ENCODE measurements at regions of chr3 and their contacts with region 1.

Region 1: DNA sequence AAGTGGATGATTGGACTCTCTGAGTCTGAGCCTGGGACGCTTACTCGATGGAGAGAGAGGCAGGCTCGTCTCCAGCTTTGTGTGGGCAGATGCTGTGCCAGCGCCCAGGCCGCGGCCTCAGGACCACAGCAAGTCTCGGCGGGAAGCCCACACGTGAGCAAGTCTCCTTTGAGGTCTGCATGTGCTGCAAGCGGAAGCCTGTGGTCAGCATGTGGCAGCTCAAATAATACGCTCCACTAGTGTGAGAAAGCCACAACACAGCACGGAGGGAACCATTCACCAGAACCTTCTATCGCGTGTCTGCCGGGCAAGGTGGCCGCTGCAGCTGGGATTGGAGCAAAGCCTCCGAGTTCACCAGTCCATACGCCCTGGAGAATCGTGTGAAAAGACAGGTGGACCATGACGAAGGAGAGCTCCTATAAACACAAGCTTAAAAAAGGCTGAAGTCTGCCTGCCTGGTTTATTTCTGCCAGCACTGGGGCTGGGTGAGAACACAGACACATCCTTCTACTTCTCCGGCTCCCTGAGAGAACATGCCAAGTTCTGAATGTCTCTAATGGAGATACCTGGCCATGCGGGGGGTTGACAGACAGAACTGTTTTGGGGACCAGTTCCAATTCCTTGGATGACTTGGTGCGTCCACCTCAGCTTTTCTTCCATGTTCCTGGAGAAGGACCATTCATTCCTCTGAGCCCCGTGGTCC is 82.0 kb upstream of the LRIG1 start:
- DNase-seq: no peak
- H3K4me3 ChIP-seq: no peak overlapping the region
- H3K27ac ChIP-seq: no peak overlapping the region
- H3K4me1 ChIP-seq: no peaks in the 10 kb centered on the region
- H3K27me3 ChIP-seq: no peaks in the 10 kb centered on the region
- CTCF ChIP-seq: no peak

Region 2: DNA sequence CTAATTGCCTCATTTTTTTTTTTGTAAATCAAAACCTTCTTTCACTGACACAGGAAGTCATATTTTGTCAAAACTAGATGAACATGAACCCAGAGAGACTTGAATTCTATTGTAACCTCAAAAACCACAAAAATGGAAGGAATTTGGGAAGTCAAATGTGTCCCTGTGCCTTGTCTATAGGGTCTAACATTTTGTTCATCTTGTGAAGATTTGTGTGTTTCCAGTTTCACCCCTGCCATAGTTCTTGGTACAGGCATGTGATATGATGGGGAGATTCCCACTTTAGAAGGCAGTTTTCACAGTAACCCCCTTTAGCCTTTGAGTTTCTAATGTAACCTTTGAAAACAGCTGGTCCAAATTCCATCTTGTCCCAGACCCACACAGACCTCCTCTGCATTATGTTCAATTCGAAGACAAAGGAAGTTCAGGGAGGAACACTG is 1576.6 kb before region 1 on chr3:
- intact Hi-C with region 1: loop called (anchors 10 kb)
- DNase-seq: no peak
- H3K4me3 ChIP-seq: no peak overlapping the region
- H3K27ac ChIP-seq: no peak overlapping the region
- H3K4me1 ChIP-seq: no peaks in the 10 kb centered on the region
- H3K27me3 ChIP-seq: no peaks in the 10 kb centered on the region
- CTCF ChIP-seq: no peak